AG04449 (cell line): ENCODE measurements at regions of chr12 and their contacts with region 1.

Region 1: DNA sequence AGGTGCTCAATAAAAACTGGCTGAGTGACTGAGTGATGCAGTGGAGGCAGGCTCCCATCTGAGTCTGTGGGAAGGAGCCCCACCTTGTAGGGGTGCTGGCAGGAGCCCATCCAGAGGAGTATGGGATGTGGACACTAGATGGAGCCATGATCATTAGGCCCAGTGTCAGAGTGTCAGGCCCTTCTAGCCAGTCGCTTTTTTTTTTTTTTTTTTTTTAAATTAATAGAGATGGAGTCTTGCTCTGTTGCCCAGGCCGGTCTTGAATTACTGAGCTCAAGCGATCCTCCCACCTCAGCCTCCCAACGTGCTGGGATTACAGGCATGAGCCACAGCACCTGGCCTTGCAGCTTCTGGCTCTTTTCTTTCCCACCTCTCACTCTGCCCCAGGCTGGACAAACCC is 11.5 kb downstream of the RITA1 start:
- DNase-seq: no peak
- H3K4me3 ChIP-seq: no peak overlapping the region
- CTCF ChIP-seq: peak; percentile 75

Region 2: GRCh38 chr12:112684742-112685141 is 512.3 kb before region 1 on chr12:
- CTCF ChIA-PET with region 1: no interaction called
- POLR2A ChIA-PET with region 1: no interaction called
- DNase-seq: no peak
- H3K4me3 ChIP-seq: no peak overlapping the region
- CTCF ChIP-seq: no peak

Region 3: GRCh38 chr12:113184900-113185773 is 11.9 kb before region 1 on chr12 and contains the starts of genes DDX54 and RITA1:
- CTCF ChIA-PET with region 1: interaction called, 27 read pairs
- POLR2A ChIA-PET with region 1: interaction called, 9 read pairs
- DNase-seq: peak; percentile 54
- H3K4me3 ChIP-seq: peak within 1 kb of the TSS; percentile 87
- CTCF ChIP-seq: no peak

Region 4: GRCh38 chr12:113221181-113221997 is 24.4 kb after region 1 on chr12 and contains the start of gene TPCN1:
- CTCF ChIA-PET with region 1: interaction called, 4 read pairs
- POLR2A ChIA-PET with region 1: interaction called, 12 read pairs
- DNase-seq: peak; percentile 100
- H3K4me3 ChIP-seq: peak within 1 kb of the TSS; percentile 91
- CTCF ChIP-seq: peak; percentile 16

Region 5: DNA sequence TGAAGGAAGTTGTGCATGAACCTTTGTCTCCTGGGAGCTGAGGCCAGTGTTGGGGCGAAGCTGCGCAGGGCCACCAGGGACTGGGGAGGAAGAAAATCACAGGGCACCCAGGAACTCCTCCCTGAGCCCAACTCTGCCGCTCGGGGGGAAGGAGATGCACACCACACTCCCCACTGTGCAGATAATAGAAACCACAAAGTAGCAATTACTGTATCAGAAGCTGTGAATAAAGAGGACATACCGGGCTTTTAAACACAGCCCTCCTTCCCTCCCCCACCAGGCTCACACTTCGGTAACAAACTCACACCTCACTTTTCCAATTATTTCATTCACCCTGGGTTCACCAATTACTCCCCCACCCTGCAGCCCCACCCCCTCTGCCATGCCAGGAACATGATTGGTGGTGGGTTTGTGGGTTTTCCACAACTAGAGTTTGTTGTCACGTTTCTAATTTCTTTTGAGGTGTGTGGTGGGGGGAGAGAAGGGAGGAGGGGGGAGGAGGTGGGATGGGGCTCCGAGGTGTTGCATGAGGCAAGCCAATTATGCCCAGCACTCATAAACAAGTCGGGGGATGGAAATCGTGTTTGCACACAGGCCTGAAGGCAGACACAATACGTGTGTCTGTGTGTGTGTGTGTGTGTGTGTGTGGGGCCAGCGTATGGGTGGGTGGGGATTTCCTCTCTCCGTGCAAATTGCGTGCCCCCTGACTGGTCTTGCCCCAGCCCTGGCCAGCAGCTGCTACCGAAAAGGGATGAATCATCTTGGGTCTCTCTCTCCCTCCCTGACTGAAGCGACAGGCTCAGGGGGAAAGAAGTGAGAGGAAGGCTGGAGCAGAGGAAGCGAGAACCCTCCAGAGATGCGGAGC is 665.8 kb after region 1 on chr12:
- CTCF ChIA-PET with region 1: no interaction called
- POLR2A ChIA-PET with region 1: no interaction called
- DNase-seq: peak; percentile 45
- H3K4me3 ChIP-seq: no peak overlapping the region
- CTCF ChIP-seq: no peak